ENCODE measurements at regions of chr11 and their contacts with region 1.

Region 1: DNA sequence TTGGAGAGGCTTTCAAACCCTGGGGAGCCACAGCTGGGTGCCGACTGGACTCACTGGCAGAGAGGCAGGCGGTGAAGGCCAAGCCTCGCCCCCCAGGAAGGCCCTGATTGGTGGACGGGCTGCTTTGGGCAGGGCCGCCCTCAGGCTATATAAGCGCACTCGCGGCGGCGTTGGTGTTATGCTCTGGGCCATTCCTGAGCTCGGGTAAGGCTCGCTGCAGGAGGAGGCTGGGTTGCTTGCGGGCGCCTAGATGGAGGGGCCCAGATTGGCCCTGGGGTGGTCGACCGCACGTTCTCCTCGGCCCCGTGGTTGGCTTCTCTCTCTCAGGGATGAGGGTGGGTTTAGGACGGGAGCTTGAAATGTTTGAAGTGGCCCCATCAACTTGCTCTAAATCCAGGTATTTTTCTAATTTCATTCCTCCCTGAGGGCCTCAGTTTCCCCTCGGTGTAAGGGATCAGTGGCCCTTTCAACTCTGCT is at the start of gene SPDYC:
- DNase-seq: no peak
- H3K4me3 ChIP-seq: no peak within 1 kb of the TSS
- H3K4me3 Mint-ChIP-seq: no peak within 1 kb of the TSS
- H3K27ac ChIP-seq: no peak within 1 kb of the TSS
- H3K27ac Mint-ChIP-seq: peak within 1 kb of the TSS; percentile 0 to 89 (median 66)
- H3K4me1 ChIP-seq: peaks cover 5 to 6% of the 10 kb centered on the region in 2 donors
- H3K4me1 Mint-ChIP-seq: peaks cover 11% of the 10 kb centered on the region
- H3K27me3 ChIP-seq: no peaks in the 10 kb centered on the region
- H3K27me3 Mint-ChIP-seq: peaks cover 1 to 7% (median 2%) of the 10 kb centered on the region in 3 donors
- CTCF ChIP-seq: no peak
- polyA plus RNA-seq, gene SPDYC: 0.64 TPM in 1 of 3 donors, not detected in the others

Region 2: DNA sequence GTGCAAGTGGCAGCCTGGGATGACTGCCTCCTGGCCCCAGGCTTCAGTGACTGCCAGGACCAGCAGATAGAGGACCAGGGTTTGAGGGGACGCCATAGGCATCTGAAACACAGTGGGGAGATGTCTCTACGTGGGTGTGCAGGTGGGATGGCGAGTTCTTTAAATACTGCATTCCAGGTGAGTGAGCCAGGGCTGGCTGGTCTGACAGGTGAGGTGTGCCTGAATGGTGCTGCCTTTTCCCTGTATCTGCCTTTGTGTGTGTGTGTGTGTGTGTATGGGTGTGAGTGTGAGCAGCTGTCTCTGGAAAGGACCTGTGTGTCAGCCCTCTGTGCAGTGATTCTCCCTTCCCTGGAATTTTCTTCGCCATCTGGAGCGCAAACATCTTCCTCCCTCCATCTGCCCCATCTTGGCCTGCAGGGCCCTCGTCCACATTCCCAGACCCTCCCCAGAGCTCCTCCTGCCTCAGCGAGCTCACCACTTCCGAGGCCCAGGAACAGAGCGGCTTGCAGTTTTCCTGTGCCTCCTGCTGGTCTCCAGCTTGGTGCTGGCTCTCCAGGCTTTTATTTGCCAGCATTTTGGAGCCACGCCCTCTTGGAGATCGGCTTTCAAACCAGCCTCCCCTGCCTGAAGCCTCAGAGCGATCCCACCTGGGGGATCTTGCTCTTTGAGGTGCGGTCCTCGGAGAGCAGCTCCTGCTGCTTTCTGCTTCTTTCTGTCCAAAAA is 234.6 kb before region 1 on chr11 and contains the start of gene GPHA2:
- intact Hi-C with region 1: loop called in 1 of 2 experiments (anchors 5 kb)
- DNase-seq: no peak
- H3K4me3 ChIP-seq: no peak within 1 kb of the TSS
- H3K4me3 Mint-ChIP-seq: no peak within 1 kb of the TSS
- H3K27ac ChIP-seq: no peak within 1 kb of the TSS
- H3K27ac Mint-ChIP-seq: peak within 1 kb of the TSS in 1 of 7 donors; percentile 73
- H3K4me1 ChIP-seq: peaks cover 0 to 3% of the 10 kb centered on the region in 2 donors
- H3K4me1 Mint-ChIP-seq: peaks cover 4% of the 10 kb centered on the region
- H3K27me3 ChIP-seq: no peaks in the 10 kb centered on the region
- H3K27me3 Mint-ChIP-seq: peaks cover 4 to 9% (median 8%) of the 10 kb centered on the region in 3 donors
- CTCF ChIP-seq: no peak
- polyA plus RNA-seq, gene GPHA2: not detected

Region 3: GRCh38 chr11:65290448-65291165 is 120.5 kb after region 1 on chr11:
- intact Hi-C with region 1: no loop called
- DNase-seq: peak; percentile 91 to 100 (median 99)
- H3K4me3 ChIP-seq: peak overlapping the region; percentile 1 to 60 (median 23)
- H3K4me3 Mint-ChIP-seq: peak overlapping the region; percentile 74 to 90
- H3K27ac ChIP-seq: peak overlapping the region; percentile 94 to 96
- H3K27ac Mint-ChIP-seq: peak overlapping the region; percentile 97 to 100 (median 99)
- H3K4me1 ChIP-seq: peaks cover 50% of the 10 kb centered on the region in 2 donors
- H3K4me1 Mint-ChIP-seq: peaks cover 55% of the 10 kb centered on the region
- H3K27me3 ChIP-seq: no peaks in the 10 kb centered on the region
- H3K27me3 Mint-ChIP-seq: peaks cover 0 to 4% (median 0%) of the 10 kb centered on the region in 3 donors
- CTCF ChIP-seq: no peak

Measured in CD14-positive monocyte (primary cell).